ENCODE measurements at regions of chr2 and their contacts with region 1.

Region 1: DNA sequence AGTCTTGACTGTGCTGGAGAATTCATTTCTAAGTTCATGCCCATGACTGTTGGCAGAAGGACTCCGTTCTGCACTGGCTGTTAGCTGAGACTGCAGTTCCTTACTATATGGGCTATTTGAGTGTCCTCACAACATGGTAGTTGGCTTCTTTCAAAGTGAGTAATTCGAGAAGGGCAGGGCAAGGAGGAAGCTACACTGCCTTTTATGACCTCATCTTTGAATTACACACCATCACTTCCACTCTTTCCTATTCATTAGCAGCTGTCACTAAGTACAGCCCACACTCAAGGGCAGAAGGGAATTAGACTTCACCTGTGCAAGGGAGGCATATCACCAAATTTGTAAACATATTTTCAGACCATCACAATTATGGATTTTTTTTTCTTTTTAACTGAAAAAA is 55.9 kb upstream of the EPAS1 start:
- DNase-seq: peak; percentile 55
- H3K4me3 ChIP-seq: no peak overlapping the region
- H3K27ac ChIP-seq: no peak overlapping the region
- H3K4me1 ChIP-seq: peaks cover 9% of the 10 kb centered on the region
- H3K27me3 ChIP-seq: no peaks in the 10 kb centered on the region
- CTCF ChIP-seq: no peak
- POLR2A ChIP-seq: no peak

Region 2: DNA sequence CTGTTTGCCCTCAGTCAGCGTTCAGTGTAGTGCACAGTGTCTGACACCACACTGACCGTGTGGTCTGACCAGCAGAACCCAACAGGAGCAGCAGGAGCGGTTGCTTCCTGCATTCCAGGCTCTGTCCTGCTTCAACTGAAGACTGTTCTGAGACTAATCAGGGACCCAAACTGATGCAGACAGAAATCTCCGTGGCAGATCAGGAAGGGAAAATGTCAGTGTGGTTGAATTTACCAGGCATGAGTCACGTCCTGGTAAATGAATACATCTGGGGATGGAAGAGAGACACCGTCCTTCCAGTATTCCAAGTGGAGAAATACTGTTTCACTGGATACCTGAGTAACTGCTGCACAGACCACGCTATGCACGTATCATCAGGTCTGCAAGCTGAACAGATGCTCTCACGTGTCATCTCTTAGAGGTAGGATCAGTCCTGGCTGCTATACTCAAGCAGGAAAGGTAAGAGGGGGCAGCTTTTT is 167.8 kb before region 1 on chr2:
- CTCF ChIA-PET with region 1: no interaction called
- POLR2A ChIA-PET with region 1: no interaction called
- dilution Hi-C with region 1: no loop called
- intact Hi-C with region 1: no loop called
- DNase-seq: peak; percentile 97
- H3K4me3 ChIP-seq: peak overlapping the region; percentile 13 to 88 (median 27)
- H3K27ac ChIP-seq: peak overlapping the region; percentile 84
- H3K4me1 ChIP-seq: peaks cover 71% of the 10 kb centered on the region
- H3K27me3 ChIP-seq: no peaks in the 10 kb centered on the region
- CTCF ChIP-seq: no peak
- POLR2A ChIP-seq: peak; percentile 65

Region 3: DNA sequence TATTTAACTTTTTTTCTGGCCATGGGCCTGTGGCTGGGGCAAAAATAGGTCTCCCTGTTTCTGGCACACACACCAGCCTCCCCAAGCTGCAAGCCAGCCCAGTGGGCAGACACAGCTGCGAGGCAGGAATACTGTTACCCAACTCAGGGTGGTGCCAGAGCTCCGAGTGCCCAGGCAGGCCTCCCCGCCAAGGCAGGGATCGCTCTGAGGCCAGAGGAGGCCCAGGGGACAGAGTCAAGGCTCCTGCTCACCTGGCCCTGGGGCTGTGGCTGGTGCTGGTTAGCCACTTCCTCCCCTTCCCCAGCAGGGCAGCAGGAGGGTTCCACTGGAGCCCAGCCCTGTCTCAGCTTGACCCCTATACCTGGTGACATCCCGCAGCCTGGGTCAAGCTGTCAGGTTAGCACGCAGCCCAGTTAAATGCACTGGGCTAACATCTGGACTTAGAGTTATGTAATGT is 11.2 kb before region 1 on chr2:
- CTCF ChIA-PET with region 1: interaction called, 13 read pairs
- POLR2A ChIA-PET with region 1: no interaction called
- dilution Hi-C with region 1: no loop called
- intact Hi-C with region 1: no loop called
- DNase-seq: no peak
- H3K4me3 ChIP-seq: no peak overlapping the region
- H3K27ac ChIP-seq: no peak overlapping the region
- H3K4me1 ChIP-seq: peaks cover 13% of the 10 kb centered on the region
- H3K27me3 ChIP-seq: no peaks in the 10 kb centered on the region
- CTCF ChIP-seq: no peak
- POLR2A ChIP-seq: no peak